Activated naive CD4-positive, alpha-beta T cell treated with anti-CD3 and anti-CD28 coated beads for 36 hours (primary cell): ENCODE measurements at regions of chr10 and their contacts with region 1.

Region 1: GRCh38 chr10:124719213-124719851 is 24.8 kb downstream of the FAM53B start:
- DNase-seq: peak; percentile 82
- H3K4me3 Mint-ChIP-seq: peak overlapping the region; percentile 64
- H3K27ac Mint-ChIP-seq: peak overlapping the region; percentile 84
- H3K4me1 Mint-ChIP-seq: peaks cover 89% of the 10 kb centered on the region
- H3K27me3 Mint-ChIP-seq: no peaks in the 10 kb centered on the region

Region 2: GRCh38 chr10:124221356-124222317 is 497.7 kb before region 1 on chr10:
- CTCF ChIA-PET with region 1: no interaction called
- intact Hi-C with region 1: loop called (anchors 2 kb)
- DNase-seq: no peak
- H3K4me3 Mint-ChIP-seq: no peak overlapping the region
- H3K27ac Mint-ChIP-seq: no peak overlapping the region
- H3K4me1 Mint-ChIP-seq: no peaks in the 10 kb centered on the region
- H3K27me3 Mint-ChIP-seq: no peaks in the 10 kb centered on the region

Region 3: DNA sequence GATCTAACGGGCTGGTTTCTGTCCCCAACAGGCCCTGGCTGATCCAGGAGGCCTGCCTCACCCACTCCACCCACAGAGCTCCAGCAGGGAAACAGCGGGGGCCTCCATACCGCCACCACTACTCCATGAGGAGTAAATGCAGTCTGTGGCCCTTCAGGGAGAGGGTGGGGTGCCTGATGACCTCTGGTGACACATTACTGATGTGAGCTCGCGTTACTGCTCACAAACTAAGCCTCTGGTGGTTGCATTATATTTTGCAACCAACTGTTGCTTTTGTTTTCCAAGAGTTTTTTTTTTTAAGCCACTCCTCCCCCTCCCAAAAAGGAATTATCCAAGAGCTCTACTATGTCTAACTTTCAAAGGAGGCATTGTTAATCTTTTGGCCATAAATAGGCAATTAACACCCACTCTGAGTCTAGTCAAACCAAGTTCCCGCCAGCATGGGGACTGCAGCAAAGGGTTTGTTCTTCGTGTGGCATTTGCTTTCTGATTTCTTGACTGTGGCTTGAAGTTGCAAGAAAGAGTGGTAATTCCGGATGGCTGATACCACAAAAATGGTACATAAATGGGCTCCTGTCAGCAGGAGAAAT is 47.8 kb before region 1 on chr10:
- CTCF ChIA-PET with region 1: interaction called, 10 read pairs
- intact Hi-C with region 1: loop called (anchors 1 kb)
- DNase-seq: peak; percentile 59
- H3K4me3 Mint-ChIP-seq: no peak overlapping the region
- H3K27ac Mint-ChIP-seq: peak overlapping the region; percentile 64
- H3K4me1 Mint-ChIP-seq: peaks cover 73% of the 10 kb centered on the region
- H3K27me3 Mint-ChIP-seq: no peaks in the 10 kb centered on the region

Region 4: DNA sequence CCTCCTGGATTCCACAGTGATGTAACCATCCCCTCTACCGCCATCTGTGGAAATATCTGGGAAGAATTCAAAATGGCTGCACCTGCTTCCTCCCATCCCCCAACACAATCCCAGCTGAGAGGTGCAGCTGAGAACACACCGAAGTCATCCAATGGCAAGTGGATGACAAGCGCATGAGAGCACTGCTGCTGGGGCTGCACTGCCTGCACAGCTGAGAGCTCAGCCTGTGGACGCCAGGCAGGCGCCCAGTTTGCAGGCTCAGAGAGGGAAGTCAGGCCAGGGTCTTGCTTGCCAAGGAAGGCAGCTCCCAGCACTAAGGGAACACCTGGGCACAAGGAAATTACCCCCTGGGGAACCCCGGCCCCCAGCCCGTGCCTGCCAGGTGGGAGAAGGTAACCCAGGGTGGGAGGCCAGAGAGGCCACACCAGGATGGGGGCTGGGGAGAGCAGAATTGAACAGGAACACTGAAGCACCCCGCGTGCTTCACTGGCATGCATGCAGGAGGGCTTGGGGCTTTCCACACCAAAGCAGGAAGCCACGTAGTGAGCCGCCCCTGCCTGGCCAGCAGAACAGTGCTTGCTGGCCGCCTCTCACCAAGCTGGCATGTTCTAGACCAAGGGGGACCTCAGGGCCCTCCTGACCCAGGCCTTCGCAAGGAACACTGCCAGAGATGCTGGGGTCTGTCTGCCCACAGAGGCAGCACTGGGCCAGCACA is 21.3 kb before region 1 on chr10:
- CTCF ChIA-PET with region 1: interaction called, 67 read pairs
- intact Hi-C with region 1: loop called (anchors 1 kb)
- DNase-seq: peak; percentile 73
- H3K4me3 Mint-ChIP-seq: no peak overlapping the region
- H3K27ac Mint-ChIP-seq: peak overlapping the region; percentile 89
- H3K4me1 Mint-ChIP-seq: peaks cover 87% of the 10 kb centered on the region
- H3K27me3 Mint-ChIP-seq: no peaks in the 10 kb centered on the region

Region 5: DNA sequence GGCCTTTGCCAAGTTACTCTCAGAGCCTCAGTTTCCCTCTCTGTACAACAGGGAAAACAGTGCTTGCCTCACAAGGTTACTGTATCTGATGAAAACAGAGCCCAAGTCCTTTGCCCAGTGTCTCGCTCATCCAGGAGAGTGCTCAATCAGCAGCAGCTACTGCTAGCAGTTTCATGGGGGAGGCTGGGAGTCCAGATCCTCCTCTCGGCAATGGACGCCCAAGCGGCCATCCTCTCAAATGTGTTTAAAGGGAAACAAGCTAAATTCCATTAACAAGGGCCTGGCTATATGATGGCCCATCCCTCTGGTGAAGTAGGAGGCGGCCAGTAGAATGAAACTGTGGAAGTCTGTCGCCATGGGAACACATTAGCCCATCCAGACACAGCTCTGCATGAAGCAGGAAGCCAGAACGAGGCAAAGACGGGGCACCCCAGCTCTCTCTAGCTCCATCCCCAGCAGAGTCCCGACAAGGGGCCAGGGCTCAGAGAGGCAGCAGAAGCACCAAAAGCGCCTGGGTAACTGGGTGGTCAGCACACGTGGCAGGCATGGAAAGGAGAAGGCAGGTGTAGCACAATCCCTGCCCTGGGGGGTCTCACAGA is 10.3 kb before region 1 on chr10:
- CTCF ChIA-PET with region 1: interaction called, 67 read pairs
- intact Hi-C with region 1: no loop called
- DNase-seq: no peak
- H3K4me3 Mint-ChIP-seq: no peak overlapping the region
- H3K27ac Mint-ChIP-seq: no peak overlapping the region
- H3K4me1 Mint-ChIP-seq: peaks cover 67% of the 10 kb centered on the region
- H3K27me3 Mint-ChIP-seq: no peaks in the 10 kb centered on the region

Region 6: GRCh38 chr10:124791378-124792348 is 72.3 kb after region 1 on chr10 and contains the start of gene EEF1AKMT2:
- CTCF ChIA-PET with region 1: no interaction called
- intact Hi-C with region 1: loop called (anchors 2 kb)
- DNase-seq: peak; percentile 79
- H3K4me3 Mint-ChIP-seq: peak within 1 kb of the TSS; percentile 84
- H3K27ac Mint-ChIP-seq: peak within 1 kb of the TSS; percentile 93
- H3K4me1 Mint-ChIP-seq: peaks cover 18% of the 10 kb centered on the region
- H3K27me3 Mint-ChIP-seq: no peaks in the 10 kb centered on the region
- total RNA-seq, gene EEF1AKMT2: 22.5 to 25.5 TPM

Region 7: GRCh38 chr10:124971276-124971675 is 251.9 kb after region 1 on chr10:
- CTCF ChIA-PET with region 1: no interaction called
- intact Hi-C with region 1: no loop called
- DNase-seq: no peak
- H3K4me3 Mint-ChIP-seq: no peak overlapping the region
- H3K27ac Mint-ChIP-seq: no peak overlapping the region
- H3K4me1 Mint-ChIP-seq: peaks cover 31% of the 10 kb centered on the region
- H3K27me3 Mint-ChIP-seq: no peaks in the 10 kb centered on the region